Activated CD4-positive, alpha-beta T cell treated with anti-CD3 and anti-CD28 coated beads, Interleukin-2, amount 10 ng/mL, durations not matched to agents 24 days and 14 days (primary cell): ENCODE measurements at regions of chr1 and their contacts with region 1.

Region 1: GRCh38 chr1:43296207-43296606 is 4.6 kb upstream of the TIE1 start:
- DNase-seq: no peak
- H3K4me3 Mint-ChIP-seq: peak overlapping the region; percentile 10
- H3K27ac Mint-ChIP-seq: peak overlapping the region; percentile 74
- H3K4me1 Mint-ChIP-seq: peaks cover 26% of the 10 kb centered on the region
- H3K27me3 Mint-ChIP-seq: no peaks in the 10 kb centered on the region

Region 2: DNA sequence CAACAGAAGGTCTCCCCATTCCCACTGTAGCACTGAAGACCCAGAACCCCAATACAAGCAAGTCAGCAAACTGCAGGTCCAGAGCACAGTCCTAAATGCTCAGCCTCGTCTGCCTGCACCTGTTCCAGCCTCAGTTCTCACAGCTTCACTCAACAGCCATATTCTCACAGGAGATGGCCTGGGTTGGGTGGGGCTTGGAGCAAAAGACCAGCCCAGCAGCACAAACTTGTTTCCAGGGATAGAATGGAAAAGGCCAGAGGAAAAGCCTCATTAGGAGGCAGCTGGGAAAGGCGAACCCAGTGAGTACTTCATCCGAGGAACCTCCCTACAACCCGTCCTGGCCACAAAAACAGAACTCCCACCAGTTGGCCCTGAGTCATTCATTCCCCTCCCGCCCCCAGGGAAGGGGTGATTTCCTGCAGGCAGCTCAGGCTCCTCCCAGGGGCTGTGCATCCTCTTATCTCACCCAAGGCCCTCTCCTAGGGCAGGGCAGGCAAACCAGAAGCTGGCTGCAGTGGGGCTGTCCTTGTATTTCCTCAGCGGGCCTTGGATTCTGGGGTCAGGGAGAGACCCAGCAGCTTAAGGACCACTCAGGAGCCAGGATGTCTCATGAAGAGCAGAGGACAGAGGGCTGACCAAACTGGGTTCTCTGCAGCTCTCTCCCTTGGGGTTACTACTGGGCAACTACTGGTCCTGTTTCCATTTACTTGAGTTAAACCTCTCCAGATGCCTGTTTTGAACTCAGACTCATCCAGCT is 34.0 kb after region 1 on chr1:
- intact Hi-C with region 1: loop called (anchors 5 kb)
- DNase-seq: peak; percentile 78
- H3K4me3 Mint-ChIP-seq: peak overlapping the region; percentile 38
- H3K27ac Mint-ChIP-seq: peak overlapping the region; percentile 84
- H3K4me1 Mint-ChIP-seq: peaks cover 23% of the 10 kb centered on the region
- H3K27me3 Mint-ChIP-seq: no peaks in the 10 kb centered on the region